Endothelial cell of umbilical vein (primary cell): ENCODE measurements at regions of chr1 and their contacts with region 1.

Region 1: DNA sequence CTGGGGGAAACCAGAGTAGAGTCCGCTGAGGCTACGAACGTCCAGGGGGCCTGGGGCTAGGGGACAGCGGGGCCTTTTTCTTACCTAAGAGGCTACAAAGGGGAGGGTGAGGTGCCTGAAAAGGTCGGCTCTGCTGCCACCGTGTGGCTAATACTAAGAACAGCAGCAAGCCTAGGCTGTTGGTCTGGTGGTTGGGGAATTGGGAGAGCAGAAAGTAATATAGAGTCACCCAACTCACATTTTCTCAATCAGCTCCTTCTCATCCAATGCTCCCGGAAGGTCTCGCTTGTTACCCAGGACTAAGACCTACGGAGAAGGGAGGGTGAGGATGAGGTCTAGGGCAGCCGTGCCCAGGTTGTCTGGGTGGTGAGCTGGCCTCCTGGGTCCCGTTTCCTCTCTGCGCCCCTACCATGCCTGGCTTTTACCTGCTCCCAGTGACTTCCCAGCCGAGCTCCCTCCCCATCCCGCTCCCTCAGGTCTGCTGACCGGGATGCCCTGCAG is 9.3 kb downstream of the ARL8A start:
- DNase-seq: peak; percentile 60
- H3K4me3 ChIP-seq: no peak overlapping the region
- H3K27ac ChIP-seq: no peak overlapping the region
- H3K4me1 ChIP-seq: no peaks in the 10 kb centered on the region
- H3K27me3 ChIP-seq: no peaks in the 10 kb centered on the region
- CTCF ChIP-seq: peak; percentile 72 to 84
- POLR2A ChIP-seq: no peak

Region 2: GRCh38 chr1:201999625-202000238 is 135.5 kb before region 1 on chr1:
- CTCF ChIA-PET with region 1: interaction called, 19 read pairs
- POLR2A ChIA-PET with region 1: no interaction called
- dilution Hi-C with region 1: no loop called
- intact Hi-C with region 1: no loop called
- DNase-seq: peak; percentile 39
- H3K4me3 ChIP-seq: no peak overlapping the region
- H3K27ac ChIP-seq: no peak overlapping the region
- H3K4me1 ChIP-seq: no peaks in the 10 kb centered on the region
- H3K27me3 ChIP-seq: no peaks in the 10 kb centered on the region
- CTCF ChIP-seq: peak; percentile 74 to 81
- POLR2A ChIP-seq: no peak

Region 3: GRCh38 chr1:202009326-202010179 is 125.7 kb before region 1 on chr1:
- CTCF ChIA-PET with region 1: interaction called, 22 read pairs
- POLR2A ChIA-PET with region 1: no interaction called
- dilution Hi-C with region 1: no loop called
- intact Hi-C with region 1: loop called (anchors 1 kb)
- DNase-seq: peak; percentile 60
- H3K4me3 ChIP-seq: no peak overlapping the region
- H3K27ac ChIP-seq: no peak overlapping the region
- H3K4me1 ChIP-seq: peaks cover 3% of the 10 kb centered on the region
- H3K27me3 ChIP-seq: no peaks in the 10 kb centered on the region
- CTCF ChIP-seq: peak; percentile 83 to 87
- POLR2A ChIP-seq: no peak

Region 4: GRCh38 chr1:202074985-202075750 is 60.1 kb before region 1 on chr1:
- CTCF ChIA-PET with region 1: no interaction called
- POLR2A ChIA-PET with region 1: no interaction called
- dilution Hi-C with region 1: no loop called
- intact Hi-C with region 1: no loop called
- DNase-seq: no peak
- H3K4me3 ChIP-seq: no peak overlapping the region
- H3K27ac ChIP-seq: no peak overlapping the region
- H3K4me1 ChIP-seq: no peaks in the 10 kb centered on the region
- H3K27me3 ChIP-seq: no peaks in the 10 kb centered on the region
- CTCF ChIP-seq: no peak
- POLR2A ChIP-seq: no peak

Region 5: GRCh38 chr1:202122639-202123335 is 12.5 kb before region 1 on chr1 and contains the start of gene GPR37L1:
- CTCF ChIA-PET with region 1: interaction called, 31 read pairs
- POLR2A ChIA-PET with region 1: no interaction called
- dilution Hi-C with region 1: no loop called
- intact Hi-C with region 1: loop called (anchors 1 kb)
- DNase-seq: peak; percentile 49
- H3K4me3 ChIP-seq: no peak within 1 kb of the TSS
- H3K27ac ChIP-seq: no peak within 1 kb of the TSS
- H3K4me1 ChIP-seq: no peaks in the 10 kb centered on the region
- H3K27me3 ChIP-seq: peaks cover 4 to 10% of the 10 kb centered on the region in 2 experiments
- CTCF ChIP-seq: peak; percentile 53 to 80
- POLR2A ChIP-seq: no peak
- total RNA-seq, gene GPR37L1: not detected in 2 replicates

Region 6: GRCh38 chr1:202154766-202155477 is 19.7 kb after region 1 on chr1:
- CTCF ChIA-PET with region 1: interaction called, 14 read pairs
- POLR2A ChIA-PET with region 1: no interaction called
- dilution Hi-C with region 1: no loop called
- intact Hi-C with region 1: no loop called
- DNase-seq: peak; percentile 59
- H3K4me3 ChIP-seq: no peak overlapping the region
- H3K27ac ChIP-seq: no peak overlapping the region
- H3K4me1 ChIP-seq: peaks cover 15% of the 10 kb centered on the region
- H3K27me3 ChIP-seq: no peaks in the 10 kb centered on the region
- CTCF ChIP-seq: peak; percentile 41 to 54
- POLR2A ChIP-seq: no peak

Region 7: DNA sequence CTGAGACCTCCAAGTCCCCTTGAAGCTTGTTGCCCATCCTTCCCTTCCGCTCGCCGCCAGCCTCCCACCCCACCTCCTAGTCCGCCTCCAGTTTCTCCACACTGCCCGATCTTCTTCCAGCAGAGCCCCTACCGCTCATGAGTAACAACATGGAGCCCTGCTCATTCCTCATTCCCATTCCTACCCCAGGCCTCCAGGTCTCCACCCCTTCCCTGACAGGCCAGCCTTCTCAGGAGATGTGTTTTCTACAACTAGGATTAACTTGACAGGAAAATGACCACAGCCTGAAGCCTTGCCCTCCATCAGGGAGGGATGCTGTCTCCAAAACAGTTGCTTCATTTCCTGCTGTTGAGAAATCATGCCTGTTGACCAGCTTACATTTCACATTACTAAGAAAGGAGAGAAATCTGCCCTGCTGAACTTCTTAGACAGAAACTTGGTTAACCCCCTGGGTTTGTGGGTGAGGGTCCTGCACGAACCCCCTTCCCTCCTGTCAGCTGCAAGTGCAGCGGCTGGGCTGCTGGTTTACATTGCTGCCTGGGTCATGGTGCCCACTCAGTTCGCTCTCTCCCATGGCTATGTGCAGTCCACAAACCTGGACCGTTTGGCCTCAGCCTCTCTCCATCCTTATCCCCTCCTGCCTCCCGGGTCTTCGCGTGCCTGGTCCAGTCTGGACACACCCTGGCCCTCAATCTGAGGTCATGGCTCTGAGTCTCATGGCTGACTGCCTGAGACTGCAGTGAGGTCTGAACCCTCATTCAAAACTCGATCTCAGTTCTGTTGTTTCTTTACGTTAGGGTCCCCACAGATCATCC is 1067.4 kb after region 1 on chr1:
- CTCF ChIA-PET with region 1: no interaction called
- POLR2A ChIA-PET with region 1: no interaction called
- dilution Hi-C with region 1: no loop called
- intact Hi-C with region 1: no loop called
- DNase-seq: no peak
- H3K4me3 ChIP-seq: no peak overlapping the region
- H3K27ac ChIP-seq: no peak overlapping the region
- H3K4me1 ChIP-seq: no peaks in the 10 kb centered on the region
- H3K27me3 ChIP-seq: peaks cover 7 to 8% of the 10 kb centered on the region in 2 experiments
- CTCF ChIP-seq: no peak
- POLR2A ChIP-seq: no peak